PC-3 (cell line): ENCODE measurements at regions of chr22 and their contacts with region 1.

Region 1: GRCh38 chr22:19113429-19113828 is 8.8 kb downstream of the DGCR2 start:
- DNase-seq: no peak
- ATAC-seq: no peak
- H3K4me3 ChIP-seq: no peak overlapping the region
- H3K27ac ChIP-seq: no peak overlapping the region
- H3K4me1 ChIP-seq: peaks cover 8% of the 10 kb centered on the region; the same call in 1 of the 2 replicates
- H3K27me3 ChIP-seq: no peaks in the 10 kb centered on the region
- CTCF ChIP-seq: no peak

Region 2: GRCh38 chr22:18983120-18983651 is 130.2 kb before region 1 on chr22:
- CTCF ChIA-PET with region 1: no interaction called
- POLR2A ChIA-PET with region 1: no interaction called
- intact Hi-C with region 1: no loop called
- DNase-seq: no peak
- ATAC-seq: no peak
- H3K4me3 ChIP-seq: no peak overlapping the region
- H3K27ac ChIP-seq: no peak overlapping the region
- H3K4me1 ChIP-seq: no peaks in the 10 kb centered on the region
- H3K27me3 ChIP-seq: no peaks in the 10 kb centered on the region
- CTCF ChIP-seq: no peak

Region 3: DNA sequence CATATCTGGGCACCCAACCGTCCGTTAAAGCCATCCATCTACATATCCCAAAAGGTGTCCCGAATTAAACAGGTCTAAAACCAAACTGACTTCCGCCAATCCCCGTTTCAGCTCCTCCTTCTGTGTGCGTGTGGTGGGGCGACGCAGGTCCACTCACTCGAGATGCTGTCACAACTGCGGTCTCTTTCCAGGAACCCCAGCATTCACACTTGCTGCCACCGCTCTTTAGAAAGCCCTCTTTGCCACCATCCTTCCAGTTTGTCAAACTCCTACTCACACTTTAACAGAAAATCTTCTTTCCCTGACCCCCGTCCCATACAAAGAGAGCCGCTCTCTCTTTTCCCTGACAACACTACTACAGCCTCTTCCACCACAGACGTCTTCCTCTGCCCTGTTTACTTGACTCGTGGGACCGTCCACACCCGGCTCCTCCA is 30.6 kb after region 1 on chr22:
- CTCF ChIA-PET with region 1: no interaction called
- POLR2A ChIA-PET with region 1: interaction called, 28 read pairs
- intact Hi-C with region 1: no loop called
- DNase-seq: no peak
- ATAC-seq: peak; percentile 39
- H3K4me3 ChIP-seq: peak overlapping the region; percentile 100
- H3K27ac ChIP-seq: 0 out of 2 replicates have a peak overlapping the region, but pooled peaks have one; percentile 9
- H3K4me1 ChIP-seq: no peaks in the 10 kb centered on the region
- H3K27me3 ChIP-seq: no peaks in the 10 kb centered on the region
- CTCF ChIP-seq: no peak

Region 4: DNA sequence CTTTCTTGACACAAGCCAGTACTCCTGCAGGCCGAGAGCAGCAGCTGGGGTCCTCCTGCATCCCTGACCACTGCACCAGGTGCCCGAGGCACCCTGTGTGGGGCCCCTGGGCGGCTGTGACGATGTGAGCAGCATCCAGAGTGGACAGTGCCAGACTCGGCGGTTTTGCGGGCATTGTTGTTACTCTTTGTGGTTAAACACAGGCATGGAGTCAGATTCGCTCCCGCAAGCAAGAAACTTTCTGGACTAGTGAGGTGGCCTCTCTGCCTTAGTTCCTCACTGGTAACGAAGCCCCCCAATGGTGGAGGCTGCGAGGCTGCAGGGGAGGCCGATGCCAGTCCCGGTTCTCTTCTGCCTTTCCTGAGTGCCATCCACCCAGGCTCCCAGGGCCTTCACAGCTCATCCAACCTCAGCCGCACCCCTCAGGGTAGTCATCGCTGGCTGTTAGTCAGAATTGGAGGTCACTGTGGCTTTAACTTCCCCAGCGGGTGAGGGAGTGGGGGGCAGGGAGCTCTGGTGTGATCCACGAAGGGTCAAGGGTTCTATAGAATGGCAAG is 414.5 kb after region 1 on chr22:
- CTCF ChIA-PET with region 1: no interaction called
- POLR2A ChIA-PET with region 1: no interaction called
- intact Hi-C with region 1: no loop called
- DNase-seq: peak; percentile 69
- ATAC-seq: peak; percentile 92
- H3K4me3 ChIP-seq: no peak overlapping the region; the same call in 1 of the 2 replicates
- H3K27ac ChIP-seq: peak overlapping the region; percentile 37
- H3K4me1 ChIP-seq: peaks cover 11% of the 10 kb centered on the region
- H3K27me3 ChIP-seq: no peaks in the 10 kb centered on the region
- CTCF ChIP-seq: no peak